Dorsolateral prefrontal cortex (tissue), 120 donors: ENCODE measurements at regions of chr17 and their contacts with region 1.

Region 1: GRCh38 chr17:45006927-45007461 is 38.9 kb upstream of the C1QL1 start:
- DNase-seq: no peak
- H3K4me3 ChIP-seq: no peak overlapping the region
- H3K27ac ChIP-seq: no peak overlapping the region
- H3K27me3 ChIP-seq: peaks cover 0 to 4% (median 0%) of the 10 kb centered on the region in 45 donors
- CTCF ChIP-seq: no peak

Region 2: DNA sequence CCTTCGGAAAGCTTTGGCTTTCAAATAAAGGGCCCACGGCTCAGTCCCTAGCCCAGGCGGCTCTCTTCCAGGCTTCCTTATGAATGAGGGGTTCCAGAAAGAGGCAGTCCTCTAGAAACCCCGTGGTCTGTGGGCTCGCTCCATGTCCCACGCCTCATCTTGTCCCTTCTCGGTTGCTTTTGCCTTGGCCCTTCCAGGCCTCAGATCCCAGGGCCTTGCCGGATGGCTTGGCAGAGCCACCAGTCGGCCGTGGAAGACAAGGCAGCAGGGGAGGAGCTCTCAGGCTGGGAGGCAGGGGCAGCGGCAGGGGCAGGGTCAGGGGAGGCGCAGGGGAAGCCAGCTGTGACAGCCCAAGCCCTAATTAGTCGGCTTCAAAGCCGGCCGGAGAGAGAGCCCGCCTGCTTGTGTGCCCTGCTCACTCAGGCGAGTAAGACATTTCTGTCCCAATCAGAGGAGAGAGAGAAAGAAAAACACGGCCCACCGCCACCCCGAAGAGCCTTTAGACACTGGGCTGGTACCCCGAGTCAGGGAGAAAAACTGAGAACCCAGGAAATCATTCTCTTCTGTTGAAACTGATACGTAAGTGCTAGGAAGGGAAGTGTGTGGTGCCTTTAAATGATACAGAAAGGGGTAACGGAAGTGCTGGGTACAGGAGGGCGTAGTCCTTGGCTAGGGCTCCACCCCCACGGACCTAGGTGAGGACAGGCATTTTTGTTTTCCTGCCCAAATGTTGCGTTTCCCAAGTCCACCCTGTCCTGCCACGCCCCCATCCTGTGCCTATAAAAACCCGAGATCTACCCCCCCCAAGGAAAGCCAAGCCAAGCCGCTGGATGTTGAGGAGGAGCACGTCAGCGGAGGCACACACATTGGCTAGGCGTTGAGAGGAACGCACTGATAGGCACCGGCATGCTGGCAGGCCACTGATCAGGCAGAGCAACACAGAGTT is 378.5 kb before region 1 on chr17:
- intact Hi-C with region 1: no loop called
- DNase-seq: peak in 5 of 10 donors; percentile 5 to 49 (median 39)
- H3K4me3 ChIP-seq: peak overlapping the region in 42 of 59 donors; percentile 8 to 56 (median 30)
- H3K27ac ChIP-seq: peak overlapping the region in 20 of 59 donors; percentile 4 to 78 (median 44)
- H3K27me3 ChIP-seq: peaks cover 0 to 22% (median 0%) of the 10 kb centered on the region in 45 donors
- CTCF ChIP-seq: no peak

Region 3: GRCh38 chr17:44733753-44734152 is 273.2 kb before region 1 on chr17:
- intact Hi-C with region 1: loop called in 1 of 2 experiments (anchors 5 kb)
- DNase-seq: peak in 7 of 10 donors; percentile 23 to 80 (median 49)
- H3K4me3 ChIP-seq: no peak overlapping the region
- H3K27ac ChIP-seq: no peak overlapping the region
- H3K27me3 ChIP-seq: no peaks in the 10 kb centered on the region
- CTCF ChIP-seq: peak in 30 of 56 donors; percentile 9 to 49 (median 31)